Endothelial cell of umbilical vein (primary cell): ENCODE measurements at regions of chr4 and their contacts with region 1.

Region 1: DNA sequence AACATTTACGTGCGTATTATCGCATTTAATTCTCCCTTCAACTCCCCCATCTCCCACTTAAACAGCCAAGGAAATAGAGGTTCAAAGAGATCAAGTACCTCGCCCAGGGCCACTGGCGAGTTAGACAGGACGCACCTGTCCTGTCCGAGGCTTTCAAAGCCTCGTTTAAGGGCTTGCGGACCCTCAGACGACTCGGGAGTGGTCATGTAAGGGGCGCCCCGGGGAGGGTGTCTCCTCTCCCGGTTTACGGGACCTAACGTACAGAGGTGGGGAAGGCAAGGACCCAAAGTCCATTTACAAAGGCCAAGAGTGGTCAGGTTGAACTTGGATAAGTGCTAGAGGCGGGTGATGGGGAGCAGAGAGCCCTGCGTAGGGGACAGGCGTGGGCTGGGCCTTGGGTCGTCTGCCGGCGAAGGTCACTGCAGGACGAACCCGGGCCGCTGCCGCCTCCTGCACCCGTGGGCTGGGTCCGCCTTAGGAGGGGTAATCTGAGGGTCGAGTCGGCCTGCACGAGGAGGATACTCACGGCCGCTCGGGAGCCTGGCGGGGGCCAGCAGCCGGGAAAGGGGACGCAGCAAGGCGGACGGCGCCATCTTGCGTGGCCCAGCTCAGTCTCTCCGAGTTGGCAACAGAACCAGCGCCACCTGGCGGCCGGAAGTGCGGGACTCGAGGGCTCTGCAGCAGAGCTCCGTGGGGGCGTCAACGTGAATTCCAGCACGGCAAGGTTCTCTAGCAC is 5.9 kb upstream of the NAA15 start:
- DNase-seq: peak; percentile 93
- H3K4me3 ChIP-seq: peak overlapping the region; percentile 63 to 87 (median 72)
- H3K27ac ChIP-seq: peak overlapping the region; percentile 65
- H3K4me1 ChIP-seq: peaks cover 20% of the 10 kb centered on the region
- H3K27me3 ChIP-seq: no peaks in the 10 kb centered on the region
- CTCF ChIP-seq: peak; percentile 96 to 97
- POLR2A ChIP-seq: peak; percentile 83

Region 2: DNA sequence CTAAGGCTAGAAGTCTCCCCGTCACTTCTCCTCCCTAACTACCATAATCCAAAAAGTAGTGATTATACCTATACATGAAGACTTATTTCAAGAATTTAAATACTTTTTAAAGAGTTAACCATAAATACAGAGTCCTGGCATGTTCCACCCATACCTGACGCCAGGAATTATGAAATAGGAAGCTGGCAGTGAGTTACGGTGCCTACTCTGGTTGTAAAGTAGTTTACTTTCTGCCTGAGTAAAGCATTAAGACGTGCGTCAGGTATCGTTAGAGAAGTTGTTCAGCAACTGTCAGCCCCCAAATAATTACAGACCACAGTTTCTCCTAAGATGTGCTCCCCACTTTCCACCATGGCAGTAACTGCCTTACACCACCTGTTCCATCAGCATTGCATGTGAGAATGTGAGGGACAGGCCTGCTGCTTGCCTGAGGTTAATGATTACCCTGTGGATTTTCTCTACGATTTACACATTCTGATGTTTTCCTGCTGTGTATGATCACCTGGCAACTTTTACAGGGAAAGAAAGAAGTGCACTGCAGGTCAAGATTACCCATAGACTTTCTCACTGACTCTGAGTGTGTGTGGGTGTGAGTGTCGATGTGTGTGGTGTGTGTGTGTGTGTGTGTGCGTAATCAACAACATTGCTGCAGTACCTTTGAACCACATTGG is 960.9 kb before region 1 on chr4:
- CTCF ChIA-PET with region 1: no interaction called
- POLR2A ChIA-PET with region 1: no interaction called
- dilution Hi-C with region 1: no loop called
- intact Hi-C with region 1: no loop called
- DNase-seq: no peak
- H3K4me3 ChIP-seq: no peak overlapping the region
- H3K27ac ChIP-seq: no peak overlapping the region
- H3K4me1 ChIP-seq: no peaks in the 10 kb centered on the region
- H3K27me3 ChIP-seq: no peaks in the 10 kb centered on the region
- CTCF ChIP-seq: no peak
- POLR2A ChIP-seq: no peak

Region 3: GRCh38 chr4:138851391-138852335 is 443.7 kb before region 1 on chr4:
- CTCF ChIA-PET with region 1: no interaction called
- POLR2A ChIA-PET with region 1: no interaction called
- dilution Hi-C with region 1: no loop called
- intact Hi-C with region 1: no loop called
- DNase-seq: no peak
- H3K4me3 ChIP-seq: no peak overlapping the region
- H3K27ac ChIP-seq: no peak overlapping the region
- H3K4me1 ChIP-seq: no peaks in the 10 kb centered on the region
- H3K27me3 ChIP-seq: peaks cover 10 to 14% of the 10 kb centered on the region in 2 experiments
- CTCF ChIP-seq: no peak
- POLR2A ChIP-seq: no peak

Region 4: DNA sequence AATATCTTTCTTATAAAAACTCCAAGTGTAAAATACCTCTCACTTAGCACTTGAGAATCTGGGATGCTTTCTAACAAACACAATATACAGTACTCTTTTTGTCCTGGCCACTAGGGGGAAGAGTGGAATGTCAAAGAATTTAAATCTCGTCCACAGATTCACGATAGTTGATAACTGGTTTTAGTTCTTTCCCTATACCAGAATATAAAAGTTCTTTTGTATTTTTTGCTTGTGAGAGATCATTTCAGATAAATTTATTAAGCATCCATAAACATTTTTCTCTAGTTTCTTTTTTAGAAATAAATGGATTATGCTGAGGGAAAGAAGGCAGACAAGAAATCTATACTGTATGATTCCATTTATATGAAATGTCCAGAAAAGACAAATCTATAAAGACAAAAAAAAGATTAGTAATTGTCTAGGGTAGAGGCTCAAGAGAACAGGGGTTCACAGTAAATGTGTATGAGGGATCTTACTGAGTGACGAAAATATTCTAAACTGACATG is 65.8 kb before region 1 on chr4:
- CTCF ChIA-PET with region 1: interaction called, 27 read pairs
- POLR2A ChIA-PET with region 1: no interaction called
- dilution Hi-C with region 1: no loop called
- intact Hi-C with region 1: loop called (anchors 1 kb)
- DNase-seq: peak; percentile 64
- H3K4me3 ChIP-seq: no peak overlapping the region
- H3K27ac ChIP-seq: no peak overlapping the region
- H3K4me1 ChIP-seq: no peaks in the 10 kb centered on the region
- H3K27me3 ChIP-seq: no peaks in the 10 kb centered on the region
- CTCF ChIP-seq: peak; percentile 36 to 50
- POLR2A ChIP-seq: no peak

Region 5: DNA sequence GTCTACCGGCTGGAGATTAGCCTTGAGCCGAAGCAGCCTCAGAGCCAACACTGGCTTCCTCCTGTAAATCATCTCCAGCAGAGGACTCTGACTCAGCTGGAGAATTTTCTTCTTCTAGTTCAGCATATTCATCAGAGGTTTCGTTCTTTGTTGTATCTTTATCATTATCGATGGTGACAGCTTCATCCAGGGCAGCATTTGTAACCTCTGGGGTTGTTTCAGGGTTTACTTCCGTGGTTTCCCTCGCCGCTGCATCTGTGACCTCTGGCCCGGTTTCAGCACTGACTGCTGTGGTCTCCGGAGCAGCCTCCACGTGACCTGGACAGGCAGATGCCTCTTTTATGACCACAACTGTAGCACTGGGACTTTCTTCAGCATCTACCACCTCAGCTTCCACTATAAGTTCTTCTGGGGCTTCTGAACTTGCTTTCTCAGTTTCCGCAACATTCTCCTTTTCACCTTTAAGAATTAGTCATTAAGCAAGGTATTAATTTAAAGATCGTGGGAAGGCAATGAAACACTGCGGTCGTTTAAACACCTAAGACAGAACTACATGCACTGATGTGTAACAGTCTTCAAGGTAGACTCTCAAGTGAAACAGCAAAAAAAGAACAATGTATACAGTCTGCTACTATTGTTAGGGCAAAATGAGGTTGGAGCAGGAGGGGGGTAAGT is 28.7 kb before region 1 on chr4:
- CTCF ChIA-PET with region 1: interaction called, 23 read pairs
- POLR2A ChIA-PET with region 1: no interaction called
- dilution Hi-C with region 1: no loop called
- intact Hi-C with region 1: no loop called
- DNase-seq: peak; percentile 87
- H3K4me3 ChIP-seq: peak overlapping the region in 2 of 3 experiments; percentile 17 to 20
- H3K27ac ChIP-seq: peak overlapping the region; percentile 54
- H3K4me1 ChIP-seq: peaks cover 14% of the 10 kb centered on the region
- H3K27me3 ChIP-seq: no peaks in the 10 kb centered on the region
- CTCF ChIP-seq: no peak
- POLR2A ChIP-seq: peak; percentile 42

Region 6: DNA sequence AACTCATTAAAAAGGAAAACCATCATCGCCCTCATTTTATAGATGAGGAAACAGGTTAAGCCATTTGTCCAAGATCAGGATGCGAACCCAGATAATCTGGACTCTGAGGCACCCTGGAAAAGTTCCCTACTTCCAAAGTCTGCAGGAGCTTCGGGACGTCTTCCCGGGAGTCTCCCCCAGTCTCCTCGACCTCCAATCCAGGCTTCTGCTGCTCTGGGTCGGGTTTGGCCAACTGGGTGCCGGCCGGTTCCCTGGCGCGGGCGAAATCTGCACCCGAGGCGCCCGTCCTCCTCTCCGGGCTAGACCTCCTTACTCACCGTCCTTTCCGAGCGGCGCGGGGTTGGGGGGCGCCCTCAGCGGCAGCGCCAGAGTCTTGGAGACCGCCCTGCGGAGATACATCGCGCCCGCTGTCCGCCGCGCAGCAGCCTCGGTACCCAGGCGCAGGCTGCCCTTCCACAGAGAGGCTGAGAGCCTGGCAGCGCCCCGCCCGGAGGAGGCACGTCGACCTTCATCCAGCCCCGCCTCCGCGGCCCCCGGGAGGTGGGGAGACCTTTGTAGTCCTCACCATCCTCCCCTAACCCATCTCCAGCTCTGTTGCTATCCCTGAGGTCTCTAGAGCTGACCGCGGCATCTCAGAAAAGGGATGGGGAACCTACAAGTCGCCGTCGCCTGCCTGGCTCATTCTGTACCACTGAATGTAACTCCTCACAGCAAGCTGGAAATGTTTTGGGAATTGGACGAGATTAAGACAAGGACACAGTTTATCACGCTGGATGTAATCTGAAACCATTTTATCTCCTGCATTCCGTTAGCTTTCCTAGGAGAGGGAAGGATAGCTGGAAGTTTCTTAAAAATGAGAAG is 15.4 kb before region 1 on chr4 and contains the start of gene MGARP:
- CTCF ChIA-PET with region 1: interaction called, 74 read pairs
- POLR2A ChIA-PET with region 1: interaction called, 4 read pairs
- dilution Hi-C with region 1: no loop called
- intact Hi-C with region 1: loop called (anchors 1 kb)
- DNase-seq: peak; percentile 73
- H3K4me3 ChIP-seq: peak within 1 kb of the TSS; percentile 59 to 80 (median 68)
- H3K27ac ChIP-seq: no peak within 1 kb of the TSS
- H3K4me1 ChIP-seq: peaks cover 26% of the 10 kb centered on the region
- H3K27me3 ChIP-seq: no peaks in the 10 kb centered on the region
- CTCF ChIP-seq: peak in 1 of 2 donors; percentile 2
- POLR2A ChIP-seq: peak; percentile 53
- total RNA-seq, gene MGARP: 16.2 and 25.9 TPM in 2 replicates